ENCODE measurements at regions of chr12 and their contacts with region 1.

Region 1: DNA sequence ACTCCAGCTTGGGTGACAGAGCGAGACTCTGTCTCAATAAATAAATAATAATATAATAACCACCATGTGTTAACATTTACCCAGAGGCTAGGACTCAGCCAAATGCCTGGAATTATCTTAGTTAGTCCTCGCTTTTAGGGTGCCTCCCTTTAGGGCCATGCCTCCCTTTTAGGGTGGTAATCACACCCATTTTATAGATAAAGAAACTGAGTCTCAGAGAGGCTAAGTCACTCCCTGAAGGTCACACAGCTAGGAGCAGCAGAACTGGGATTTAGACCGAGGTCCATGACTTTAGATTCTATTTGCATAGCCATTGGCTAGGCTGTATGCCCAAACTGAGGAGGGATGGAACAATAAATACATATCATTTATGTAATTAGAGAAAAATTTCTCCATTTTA is 11.4 kb downstream of the TESC start:
- DNase-seq: no peak
- ATAC-seq: no peak
- H3K4me3 ChIP-seq: no peak overlapping the region
- H3K4me3 Mint-ChIP-seq: no peak overlapping the region
- H3K27ac ChIP-seq: no peak overlapping the region
- H3K27ac Mint-ChIP-seq: no peak overlapping the region
- H3K4me1 ChIP-seq: no peaks in the 10 kb centered on the region
- H3K4me1 Mint-ChIP-seq: peaks cover 0 to 6% (median 0%) of the 10 kb centered on the region in 7 donors
- H3K27me3 ChIP-seq: no peaks in the 10 kb centered on the region
- H3K27me3 Mint-ChIP-seq: no peaks in the 10 kb centered on the region

Region 2: GRCh38 chr12:117119592-117120198 is 31.9 kb after region 1 on chr12:
- CTCF ChIA-PET with region 1: no interaction called
- POLR2A ChIA-PET with region 1: no interaction called
- intact Hi-C with region 1: loop called in 1 of 2 experiments (anchors 1 kb)
- DNase-seq: peak in 4 of 9 donors; percentile 17 to 43 (median 21)
- ATAC-seq: peak; percentile 51
- H3K4me3 ChIP-seq: no peak overlapping the region
- H3K4me3 Mint-ChIP-seq: no peak overlapping the region
- H3K27ac ChIP-seq: no peak overlapping the region
- H3K27ac Mint-ChIP-seq: no peak overlapping the region
- H3K4me1 ChIP-seq: no peaks in the 10 kb centered on the region
- H3K4me1 Mint-ChIP-seq: peaks cover 0 to 4% (median 0%) of the 10 kb centered on the region in 7 donors
- H3K27me3 ChIP-seq: no peaks in the 10 kb centered on the region
- H3K27me3 Mint-ChIP-seq: no peaks in the 10 kb centered on the region